ENCODE measurements at regions of chr6 and their contacts with region 1.

Region 1: GRCh38 chr6:44475779-44476434 is 88.4 kb downstream of the CDC5L start:
- DNase-seq: peak; percentile 93

Region 2: DNA sequence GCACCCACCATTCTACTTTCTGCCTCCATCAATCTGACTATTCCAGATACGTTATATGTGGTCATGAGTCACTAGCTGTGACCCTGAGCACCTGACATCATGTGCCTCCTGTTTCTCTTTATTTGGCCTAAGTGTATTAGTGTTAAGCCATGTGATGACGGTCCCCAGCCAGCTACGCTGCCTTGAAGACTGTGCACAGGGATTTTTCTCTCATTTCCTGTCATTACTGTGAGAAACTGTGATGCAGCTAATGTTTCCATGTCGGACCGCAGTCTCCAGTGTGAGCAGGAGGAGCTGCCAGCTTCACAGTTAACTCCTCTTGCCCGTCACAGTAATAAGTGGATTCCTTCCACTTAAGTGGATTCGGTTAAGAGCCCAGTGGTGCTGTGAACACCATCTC is 143.3 kb before region 1 on chr6:
- intact Hi-C with region 1: no loop called
- DNase-seq: no peak

Region 3: GRCh38 chr6:44456070-44456965 is 19.6 kb before region 1 on chr6:
- intact Hi-C with region 1: no loop called
- DNase-seq: no peak

Region 4: GRCh38 chr6:44630125-44631028 is 154.5 kb after region 1 on chr6:
- intact Hi-C with region 1: loop called in 1 of 2 experiments (anchors 10 kb)
- DNase-seq: no peak

Region 5: GRCh38 chr6:44642870-44643529 is 167.1 kb after region 1 on chr6:
- intact Hi-C with region 1: loop called (anchors 10 kb)
- DNase-seq: no peak

Measured in posterior vena cava (tissue), 2 donors.